ENCODE measurements at regions of chr10 and their contacts with region 1.

Region 1: GRCh38 chr10:62816331-62817120 is at the start of gene EGR2:
- DNase-seq: peak; percentile 98
- H3K4me3 Mint-ChIP-seq: peak within 1 kb of the TSS; percentile 95
- H3K27ac Mint-ChIP-seq: peak within 1 kb of the TSS; percentile 98
- H3K4me1 Mint-ChIP-seq: peaks cover 41% of the 10 kb centered on the region
- H3K27me3 Mint-ChIP-seq: peaks cover 14% of the 10 kb centered on the region
- total RNA-seq, gene EGR2: 18.5 to 21.4 TPM

Region 2: DNA sequence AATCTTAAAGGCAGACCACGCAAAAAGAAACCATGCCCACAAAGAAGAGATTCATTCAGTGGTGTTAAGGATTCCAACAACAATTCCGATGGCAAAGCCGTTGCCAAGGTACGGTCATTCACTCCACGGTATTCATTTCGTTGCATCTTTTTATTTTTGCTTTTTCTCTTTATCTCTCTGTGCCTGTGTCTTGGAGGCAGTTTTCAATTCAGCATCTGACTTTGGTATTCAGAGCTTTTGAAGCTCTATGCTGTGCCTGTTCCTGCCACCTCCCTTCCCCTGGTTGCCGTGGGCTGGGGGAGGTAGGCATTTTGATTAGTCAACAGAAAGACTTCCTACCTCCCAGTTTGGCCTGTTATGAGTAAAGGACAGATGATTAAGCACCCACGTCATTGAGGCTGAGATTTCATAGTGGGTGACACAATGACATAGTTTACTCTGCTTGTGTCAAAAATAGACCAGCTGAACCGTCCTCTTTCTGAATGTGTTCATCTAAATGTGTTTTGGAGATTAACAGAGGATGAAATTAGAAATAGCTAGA is 765.6 kb before region 1 on chr10:
- CTCF ChIA-PET with region 1: no interaction called
- intact Hi-C with region 1: loop called (anchors 1 kb)
- DNase-seq: peak; percentile 91
- H3K4me3 Mint-ChIP-seq: peak overlapping the region; percentile 94
- H3K27ac Mint-ChIP-seq: peak overlapping the region; percentile 100
- H3K4me1 Mint-ChIP-seq: peaks cover 87% of the 10 kb centered on the region
- H3K27me3 Mint-ChIP-seq: no peaks in the 10 kb centered on the region

Region 3: DNA sequence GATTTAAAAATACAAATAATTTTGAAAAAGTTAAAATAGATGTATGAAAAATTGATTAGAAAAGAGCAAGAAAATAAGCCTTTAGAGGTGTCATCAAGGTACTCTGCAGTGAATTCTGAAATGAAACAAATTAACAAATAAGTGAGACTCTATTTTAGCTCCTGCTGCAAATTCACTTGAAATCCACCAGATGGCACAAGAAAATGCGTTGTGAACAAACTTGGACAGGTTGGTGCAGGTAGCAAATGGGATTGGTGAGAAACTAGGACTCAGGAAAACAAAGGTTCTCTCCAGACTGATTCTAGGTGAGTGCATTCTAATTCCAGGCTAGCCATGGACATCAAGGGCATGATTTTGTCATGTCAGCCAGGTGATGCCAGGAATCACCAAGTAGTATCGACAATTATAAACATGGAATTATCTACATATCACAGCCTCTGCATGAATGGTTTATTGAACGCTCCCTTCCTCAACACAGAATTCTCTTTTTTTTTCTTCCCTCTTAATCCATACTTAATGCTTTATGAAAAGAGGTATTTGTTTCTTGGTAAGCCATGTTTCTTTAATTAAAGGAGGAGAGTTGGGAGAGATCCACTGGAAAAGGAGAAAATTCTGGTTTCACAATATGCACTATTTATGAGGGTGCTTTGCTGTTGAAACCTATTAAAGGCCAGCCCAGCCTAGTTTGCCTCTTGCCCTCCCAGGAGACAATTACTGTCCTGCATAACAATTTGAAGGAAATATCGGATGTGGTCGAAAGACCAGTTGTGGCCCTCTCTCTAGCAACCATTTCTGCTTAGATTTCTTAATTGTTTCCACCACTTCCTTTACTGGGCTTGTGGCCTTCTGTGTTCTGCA is 324.3 kb before region 1 on chr10:
- CTCF ChIA-PET with region 1: interaction called, 4 read pairs
- intact Hi-C with region 1: loop called (anchors 5 kb)
- DNase-seq: peak; percentile 8
- H3K4me3 Mint-ChIP-seq: no peak overlapping the region
- H3K27ac Mint-ChIP-seq: no peak overlapping the region
- H3K4me1 Mint-ChIP-seq: no peaks in the 10 kb centered on the region
- H3K27me3 Mint-ChIP-seq: no peaks in the 10 kb centered on the region

Region 4: DNA sequence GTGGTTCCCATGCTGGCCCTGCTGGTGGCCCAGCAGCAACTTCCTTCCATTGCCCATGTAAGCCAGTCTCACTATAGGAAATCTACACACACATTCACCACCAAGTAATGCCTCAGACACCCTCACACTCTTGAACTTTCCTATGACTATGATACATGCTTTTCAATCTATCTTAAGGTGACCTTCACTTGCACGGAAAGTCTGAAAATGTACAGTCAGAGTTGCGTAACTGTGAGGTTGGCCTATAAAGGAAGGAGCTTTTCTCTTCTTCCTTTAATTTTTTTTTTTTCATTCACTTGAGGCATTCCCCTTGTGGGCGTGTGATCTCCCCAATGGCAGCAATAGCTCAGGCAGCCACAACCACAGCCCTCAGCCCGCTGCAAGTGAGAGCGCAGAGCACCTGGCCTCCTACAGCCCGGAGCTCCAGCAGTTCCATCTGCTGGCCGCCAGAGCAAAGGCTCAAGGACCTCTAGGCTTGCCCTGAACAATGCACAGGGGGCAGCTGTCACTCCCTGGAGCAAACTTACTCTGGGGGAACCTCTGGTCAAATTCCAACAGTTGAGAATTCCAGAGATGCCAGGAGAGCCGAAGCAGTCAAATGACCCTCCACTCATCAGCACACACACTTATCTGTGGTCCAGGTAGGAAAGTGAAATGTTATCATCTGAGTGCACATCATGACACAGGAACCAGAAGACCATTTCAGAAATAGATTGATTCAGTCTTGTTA is 135.2 kb before region 1 on chr10:
- CTCF ChIA-PET with region 1: interaction called, 6 read pairs
- intact Hi-C with region 1: loop called (anchors 1 kb)
- DNase-seq: peak; percentile 93
- H3K4me3 Mint-ChIP-seq: no peak overlapping the region
- H3K27ac Mint-ChIP-seq: peak overlapping the region; percentile 72
- H3K4me1 Mint-ChIP-seq: peaks cover 33% of the 10 kb centered on the region
- H3K27me3 Mint-ChIP-seq: no peaks in the 10 kb centered on the region

Region 5: GRCh38 chr10:62980687-62981086 is 164.2 kb after region 1 on chr10:
- CTCF ChIA-PET with region 1: no interaction called
- intact Hi-C with region 1: loop called (anchors 1 kb)
- DNase-seq: peak; percentile 52
- H3K4me3 Mint-ChIP-seq: no peak overlapping the region
- H3K27ac Mint-ChIP-seq: peak overlapping the region; percentile 76
- H3K4me1 Mint-ChIP-seq: peaks cover 23% of the 10 kb centered on the region
- H3K27me3 Mint-ChIP-seq: peaks cover 8% of the 10 kb centered on the region

Region 6: GRCh38 chr10:63268798-63269503 is 452.4 kb after region 1 on chr10:
- CTCF ChIA-PET with region 1: no interaction called
- intact Hi-C with region 1: loop called (anchors 1 kb)
- DNase-seq: peak; percentile 91
- H3K4me3 Mint-ChIP-seq: peak overlapping the region; percentile 88
- H3K27ac Mint-ChIP-seq: peak overlapping the region; percentile 98
- H3K4me1 Mint-ChIP-seq: peaks cover 22% of the 10 kb centered on the region
- H3K27me3 Mint-ChIP-seq: no peaks in the 10 kb centered on the region